ENCODE measurements at regions of chr2 and their contacts with region 1.

Region 1: DNA sequence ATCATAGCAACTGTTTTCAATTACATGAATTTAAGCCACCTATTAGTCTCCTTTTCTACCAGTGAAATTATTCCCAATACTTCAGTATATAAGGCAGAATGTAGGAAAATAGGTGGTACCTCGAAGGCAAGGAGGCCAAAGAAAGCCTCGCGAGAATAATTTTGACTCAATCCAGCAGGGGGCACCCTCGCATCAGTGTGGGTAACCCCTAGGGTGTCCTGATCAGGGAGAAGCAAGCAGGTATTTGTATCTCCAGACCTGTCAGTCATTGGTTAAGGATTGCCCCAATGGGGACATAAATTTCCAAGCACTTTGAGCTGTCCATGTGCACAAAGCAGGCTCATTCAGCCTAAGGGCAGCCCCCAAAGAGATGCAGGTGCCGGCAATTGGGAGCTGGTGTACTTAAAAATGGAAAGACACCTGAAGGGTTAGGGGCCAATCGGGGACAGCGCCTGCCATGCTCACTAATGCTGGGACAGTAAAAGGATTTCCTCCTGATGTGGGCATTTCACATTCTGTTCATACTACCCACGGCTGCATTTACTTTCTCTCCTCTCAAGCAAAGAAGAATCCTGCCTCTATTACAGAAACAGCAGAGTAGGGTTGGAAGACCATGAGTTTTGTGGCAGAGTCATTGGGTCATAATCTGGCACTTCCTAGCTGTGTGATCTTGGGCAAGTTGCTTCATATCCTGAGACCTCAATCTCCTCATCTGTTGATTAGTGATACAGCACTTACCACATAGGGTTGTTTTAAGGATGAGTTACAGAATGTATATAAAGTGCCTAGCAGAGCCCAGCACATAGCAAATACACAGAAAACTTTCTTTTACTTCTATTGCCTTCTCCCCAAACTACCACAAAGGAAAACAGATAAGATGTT is 136.1 kb downstream of the ICOS start:
- DNase-seq: peak; percentile 38 to 90
- H3K4me3 ChIP-seq: no peak overlapping the region
- H3K27ac ChIP-seq: no peak overlapping the region
- H3K4me1 ChIP-seq: no peaks in the 10 kb centered on the region
- H3K27me3 ChIP-seq: no peaks in the 10 kb centered on the region
- CTCF ChIP-seq: peak; percentile 71 to 75 (median 74)
- EP300 ChIP-seq: no peak
- POLR2A ChIP-seq: no peak
- RAD21 ChIP-seq: peak; percentile 82 to 86

Region 2: DNA sequence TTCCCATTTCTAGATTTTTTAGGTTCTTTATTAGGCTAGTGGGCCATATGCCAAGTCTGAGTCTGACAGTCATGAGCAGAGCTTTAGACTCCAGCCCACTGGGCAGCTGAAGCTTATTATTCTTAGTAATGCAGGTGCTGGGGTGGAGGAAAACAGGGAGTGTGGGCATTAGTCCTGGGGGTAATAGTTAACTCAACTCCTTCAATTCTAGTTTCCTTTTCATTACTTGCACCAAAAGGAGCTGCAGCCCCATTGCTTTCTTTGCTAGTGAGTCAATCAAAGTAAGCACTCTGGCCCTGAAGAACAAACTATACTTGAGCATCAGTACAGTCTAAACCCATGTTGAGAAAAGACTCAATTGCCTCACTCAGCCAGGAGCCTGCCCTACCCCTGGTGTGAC is 100.6 kb before region 1 on chr2:
- CTCF ChIA-PET with region 1: no interaction called
- POLR2A ChIA-PET with region 1: no interaction called
- DNase-seq: no peak
- H3K4me3 ChIP-seq: no peak overlapping the region
- H3K27ac ChIP-seq: no peak overlapping the region
- H3K4me1 ChIP-seq: peaks cover 0 to 4% (median 0%) of the 10 kb centered on the region in 4 experiments; a peak in 1 of 7 replicates
- H3K27me3 ChIP-seq: no peaks in the 10 kb centered on the region
- CTCF ChIP-seq: no peak
- EP300 ChIP-seq: no peak
- POLR2A ChIP-seq: no peak
- RAD21 ChIP-seq: no peak

Region 3: GRCh38 chr2:204046145-204046544 is 26.5 kb before region 1 on chr2:
- CTCF ChIA-PET with region 1: interaction called, 12 read pairs
- POLR2A ChIA-PET with region 1: no interaction called
- DNase-seq: no peak
- H3K4me3 ChIP-seq: no peak overlapping the region
- H3K27ac ChIP-seq: no peak overlapping the region
- H3K4me1 ChIP-seq: no peaks in the 10 kb centered on the region
- H3K27me3 ChIP-seq: no peaks in the 10 kb centered on the region
- CTCF ChIP-seq: no peak
- EP300 ChIP-seq: no peak
- POLR2A ChIP-seq: no peak
- RAD21 ChIP-seq: no peak

Region 4: GRCh38 chr2:204061241-204061640 is 11.4 kb before region 1 on chr2:
- CTCF ChIA-PET with region 1: interaction called, 23 read pairs
- POLR2A ChIA-PET with region 1: no interaction called
- DNase-seq: no peak
- H3K4me3 ChIP-seq: no peak overlapping the region
- H3K27ac ChIP-seq: no peak overlapping the region
- H3K4me1 ChIP-seq: no peaks in the 10 kb centered on the region
- H3K27me3 ChIP-seq: no peaks in the 10 kb centered on the region
- CTCF ChIP-seq: no peak
- EP300 ChIP-seq: no peak
- POLR2A ChIP-seq: no peak
- RAD21 ChIP-seq: no peak